Heart right ventricle (tissue), 16 donors: ENCODE measurements at regions of chr6 and their contacts with region 1.

Region 1: GRCh38 chr6:160930547-160931377 is 60.8 kb upstream of the MAP3K4 start:
- DNase-seq: peak; percentile 72 to 83
- ATAC-seq: peak; percentile 91 to 97 (median 95)
- H3K4me3 ChIP-seq: peak overlapping the region; percentile 42 to 60 (median 56)
- H3K27ac ChIP-seq: peak overlapping the region in 2 of 10 donors; percentile 42 to 44
- H3K4me1 ChIP-seq: peaks cover 0 to 16% (median 7%) of the 10 kb centered on the region in 9 donors
- H3K27me3 ChIP-seq: peaks cover 0 to 24% (median 8%) of the 10 kb centered on the region in 7 donors
- CTCF ChIP-seq: peak; percentile 78 to 98 (median 91)

Region 2: GRCh38 chr6:160972111-160972510 is 41.3 kb after region 1 on chr6:
- intact Hi-C with region 1: loop called in 2 of 10 experiments (anchors 5 kb)
- DNase-seq: no peak
- ATAC-seq: peak in 1 of 8 donors; percentile 45
- H3K4me3 ChIP-seq: no peak overlapping the region
- H3K27ac ChIP-seq: peak overlapping the region in 6 of 10 donors; percentile 11 to 91 (median 78)
- H3K4me1 ChIP-seq: peaks cover 0 to 46% (median 27%) of the 10 kb centered on the region in 9 donors
- H3K27me3 ChIP-seq: no peaks in the 10 kb centered on the region
- CTCF ChIP-seq: no peak

Region 3: GRCh38 chr6:160992061-160992979 is 61.6 kb after region 1 on chr6:
- intact Hi-C with region 1: loop called in 9 of 10 experiments (anchors 1 to 5 kb)
- DNase-seq: peak; percentile 59 to 61
- ATAC-seq: peak; percentile 45 to 78 (median 74)
- H3K4me3 ChIP-seq: peak overlapping the region; percentile 67 to 100 (median 97)
- H3K27ac ChIP-seq: peak overlapping the region; percentile 81 to 99 (median 97)
- H3K4me1 ChIP-seq: peaks cover 0 to 50% (median 31%) of the 10 kb centered on the region in 9 donors
- H3K27me3 ChIP-seq: no peaks in the 10 kb centered on the region
- CTCF ChIP-seq: peak in 7 of 9 donors; percentile 40 to 77 (median 66)

Region 4: DNA sequence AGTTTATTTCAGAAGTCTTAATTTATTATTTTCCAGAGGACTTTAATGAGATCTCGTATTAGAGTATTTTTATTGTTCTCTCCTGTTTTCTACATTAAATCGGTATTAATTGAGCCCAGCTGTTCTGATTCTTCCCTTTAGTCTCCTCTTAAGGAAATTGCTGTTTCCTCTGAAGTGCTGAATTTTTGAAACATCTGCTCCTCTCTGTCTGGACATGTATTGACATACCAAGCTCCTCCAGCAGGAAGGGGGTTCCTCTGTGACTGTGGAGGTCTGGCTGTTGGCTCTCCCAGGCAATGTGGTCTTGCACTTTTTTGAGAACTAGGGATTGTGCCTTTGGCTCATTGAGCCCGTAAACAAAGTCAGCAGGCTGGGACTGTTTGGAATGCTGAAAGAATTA is 135.7 kb after region 1 on chr6:
- intact Hi-C with region 1: loop called in 3 of 10 experiments (anchors 10 kb)
- DNase-seq: no peak
- ATAC-seq: no peak
- H3K4me3 ChIP-seq: no peak overlapping the region
- H3K27ac ChIP-seq: no peak overlapping the region
- H3K4me1 ChIP-seq: peaks cover 0 to 22% (median 5%) of the 10 kb centered on the region in 9 donors
- H3K27me3 ChIP-seq: no peaks in the 10 kb centered on the region
- CTCF ChIP-seq: no peak

Region 5: GRCh38 chr6:161079566-161080262 is 149.0 kb after region 1 on chr6:
- intact Hi-C with region 1: loop called in 5 of 10 experiments (anchors 10 kb)
- DNase-seq: no peak
- ATAC-seq: peak in 3 of 8 donors; percentile 29 to 66 (median 47)
- H3K4me3 ChIP-seq: no peak overlapping the region
- H3K27ac ChIP-seq: peak overlapping the region in 1 of 10 donors; percentile 11
- H3K4me1 ChIP-seq: peaks cover 0 to 18% (median 4%) of the 10 kb centered on the region in 9 donors
- H3K27me3 ChIP-seq: no peaks in the 10 kb centered on the region
- CTCF ChIP-seq: no peak